ENCODE measurements at regions of chr6 and their contacts with region 1.

Region 1: DNA sequence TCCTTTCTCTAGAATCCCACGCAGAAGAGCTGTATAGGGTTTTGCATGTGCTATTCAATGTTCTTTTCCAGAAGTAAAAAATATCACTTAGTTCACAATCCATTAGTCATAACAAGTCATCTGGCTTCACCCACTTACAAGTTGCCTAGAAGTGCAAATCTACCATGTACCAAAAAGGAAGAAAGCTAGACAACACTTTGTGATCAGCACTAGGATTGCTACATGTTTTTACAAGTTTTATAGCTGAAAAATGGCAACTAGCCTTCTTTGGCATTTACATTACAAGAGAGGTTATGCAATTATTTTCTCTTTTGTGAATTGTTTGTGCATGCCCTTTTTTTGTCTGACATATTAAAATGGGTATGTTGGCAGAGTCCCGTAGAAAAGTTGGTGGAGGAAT is 85.6 kb upstream of the PTPRK start:
- DNase-seq: no peak
- ATAC-seq: no peak
- H3K4me3 ChIP-seq: no peak overlapping the region
- H3K27ac ChIP-seq: no peak overlapping the region
- H3K4me1 ChIP-seq: peaks cover 0 to 7% (median 0%) of the 10 kb centered on the region in 9 donors
- H3K27me3 ChIP-seq: no peaks in the 10 kb centered on the region
- CTCF ChIP-seq: no peak

Region 2: DNA sequence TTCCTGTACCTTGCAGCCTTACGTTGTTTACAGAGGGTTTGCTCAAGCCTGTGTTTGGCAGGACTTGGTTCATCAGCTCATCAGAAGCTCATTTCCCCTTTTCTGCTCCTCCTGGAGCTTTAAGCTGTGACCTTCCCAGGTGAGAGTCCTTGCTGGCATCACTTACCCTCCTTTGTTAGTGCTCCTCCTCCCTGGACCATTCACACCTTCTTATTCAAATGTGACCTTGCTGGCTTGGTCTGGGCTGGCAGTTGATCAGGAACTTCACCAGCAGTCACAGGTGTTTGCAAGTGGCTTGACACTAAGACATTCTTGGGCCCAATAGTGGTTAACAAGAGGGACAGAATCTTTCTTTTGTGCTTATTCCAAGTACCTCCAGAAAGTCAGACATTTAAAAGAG is 880.1 kb before region 1 on chr6:
- intact Hi-C with region 1: loop called in 1 of 10 experiments (anchors 5 kb)
- DNase-seq: no peak
- ATAC-seq: no peak
- H3K4me3 ChIP-seq: no peak overlapping the region
- H3K27ac ChIP-seq: no peak overlapping the region
- H3K4me1 ChIP-seq: no peaks in the 10 kb centered on the region
- H3K27me3 ChIP-seq: peaks cover 0 to 12% (median 0%) of the 10 kb centered on the region in 7 donors
- CTCF ChIP-seq: no peak

Region 3: DNA sequence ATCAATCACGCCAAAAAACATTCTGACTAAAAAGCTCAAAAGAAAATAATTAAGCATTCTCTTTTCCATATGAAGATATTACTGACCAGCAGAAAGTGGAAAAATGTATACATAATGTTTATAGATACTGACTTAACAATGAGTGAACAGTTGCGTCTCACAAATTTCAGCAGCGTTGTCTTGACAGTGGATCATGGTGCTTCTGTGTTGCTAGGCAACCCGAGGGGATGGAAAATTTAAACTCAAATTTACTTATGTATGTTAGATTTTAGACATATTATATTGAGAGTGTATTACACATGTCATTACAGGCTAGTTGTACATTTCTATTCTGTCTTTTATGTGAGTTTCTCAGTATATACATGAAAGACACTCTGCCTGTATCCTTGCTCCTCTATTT is 387.2 kb after region 1 on chr6:
- intact Hi-C with region 1: no loop called
- DNase-seq: no peak
- ATAC-seq: no peak
- H3K4me3 ChIP-seq: no peak overlapping the region
- H3K27ac ChIP-seq: no peak overlapping the region
- H3K4me1 ChIP-seq: peaks cover 0 to 20% (median 9%) of the 10 kb centered on the region in 9 donors
- H3K27me3 ChIP-seq: no peaks in the 10 kb centered on the region
- CTCF ChIP-seq: no peak